Panc1 (cell line): ENCODE measurements at regions of chr2 and their contacts with region 1.

Region 1: DNA sequence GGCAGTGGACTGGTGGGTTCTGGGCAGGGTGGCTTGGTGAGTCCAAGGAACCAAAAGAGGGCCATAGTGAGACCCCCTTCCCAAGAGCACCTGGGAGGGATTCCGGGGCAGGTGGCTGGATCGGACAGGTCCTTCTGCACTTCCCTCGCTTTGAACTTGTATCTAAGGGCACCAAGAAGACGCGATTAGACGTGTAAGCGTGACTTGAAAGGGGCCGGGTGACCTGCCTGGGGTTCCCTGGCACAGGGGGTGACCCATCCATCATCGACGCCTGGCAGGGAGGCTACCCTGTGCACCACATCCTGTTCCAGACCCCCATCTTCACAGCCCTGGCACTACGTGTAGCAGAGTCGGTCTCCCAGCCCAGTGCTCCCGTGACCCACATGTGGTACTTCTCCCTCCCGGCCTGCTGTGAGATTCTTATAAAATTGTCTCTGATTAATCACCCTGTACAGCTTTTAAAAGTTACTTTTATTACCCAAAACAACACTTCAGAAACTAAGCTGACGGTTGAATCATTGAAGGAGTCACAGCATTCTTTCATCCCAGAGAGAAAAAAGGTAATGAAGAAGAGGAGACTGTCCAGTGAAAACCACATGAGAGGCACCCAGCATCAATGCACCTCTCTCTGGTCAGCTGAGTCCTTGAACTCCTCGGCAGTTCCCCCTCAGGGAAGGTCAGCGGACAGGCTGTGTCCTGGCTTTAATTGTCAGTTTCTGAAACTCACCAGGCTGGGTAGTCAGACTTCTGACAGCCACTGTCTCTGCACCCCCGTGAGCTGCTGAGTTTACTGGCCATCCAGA is 13.0 kb downstream of the SH3BP4 start:
- DNase-seq: no peak
- ATAC-seq: no peak
- H3K4me3 ChIP-seq: peak overlapping the region in 1 of 2 experiments; percentile 8; a peak in 1 of 4 replicates
- H3K27ac ChIP-seq: peak overlapping the region; percentile 100
- H3K4me1 ChIP-seq: peaks cover 93% of the 10 kb centered on the region
- H3K27me3 ChIP-seq: no peaks in the 10 kb centered on the region
- CTCF ChIP-seq: no peak

Region 2: DNA sequence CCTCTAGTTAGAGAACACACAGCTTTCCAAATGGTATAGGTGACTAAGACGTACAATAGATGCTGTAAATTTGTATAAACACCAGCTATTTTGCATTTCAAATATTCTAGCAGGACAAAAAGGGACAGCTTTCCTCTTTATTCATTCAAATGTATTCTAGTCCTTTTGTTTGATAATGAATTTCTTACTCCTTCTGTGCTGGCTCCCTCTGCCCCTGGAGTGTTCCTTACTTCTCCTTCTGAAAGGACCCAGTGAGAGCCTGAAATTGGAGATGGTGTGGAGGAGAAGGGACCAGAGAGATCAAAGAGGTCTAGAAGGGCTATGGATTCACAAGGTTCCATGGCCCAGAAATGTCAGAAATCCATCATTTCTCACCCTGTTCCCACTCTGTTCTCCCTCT is 66.2 kb before region 1 on chr2:
- CTCF ChIA-PET with region 1: no interaction called
- POLR2A ChIA-PET with region 1: no interaction called
- in situ Hi-C with region 1: no loop called
- intact Hi-C with region 1: no loop called
- DNase-seq: no peak
- ATAC-seq: no peak
- H3K4me3 ChIP-seq: no peak overlapping the region
- H3K27ac ChIP-seq: no peak overlapping the region
- H3K4me1 ChIP-seq: no peaks in the 10 kb centered on the region
- H3K27me3 ChIP-seq: no peaks in the 10 kb centered on the region
- CTCF ChIP-seq: no peak

Region 3: GRCh38 chr2:235070063-235070706 is 105.4 kb after region 1 on chr2:
- CTCF ChIA-PET with region 1: no interaction called
- POLR2A ChIA-PET with region 1: no interaction called
- in situ Hi-C with region 1: no loop called
- intact Hi-C with region 1: no loop called
- DNase-seq: no peak
- ATAC-seq: no peak
- H3K4me3 ChIP-seq: no peak overlapping the region
- H3K27ac ChIP-seq: no peak overlapping the region
- H3K4me1 ChIP-seq: 0 out of 2 replicates have a peak, but pooled peaks cover 2% of the 10 kb centered on the region
- H3K27me3 ChIP-seq: no peaks in the 10 kb centered on the region
- CTCF ChIP-seq: no peak

Region 4: DNA sequence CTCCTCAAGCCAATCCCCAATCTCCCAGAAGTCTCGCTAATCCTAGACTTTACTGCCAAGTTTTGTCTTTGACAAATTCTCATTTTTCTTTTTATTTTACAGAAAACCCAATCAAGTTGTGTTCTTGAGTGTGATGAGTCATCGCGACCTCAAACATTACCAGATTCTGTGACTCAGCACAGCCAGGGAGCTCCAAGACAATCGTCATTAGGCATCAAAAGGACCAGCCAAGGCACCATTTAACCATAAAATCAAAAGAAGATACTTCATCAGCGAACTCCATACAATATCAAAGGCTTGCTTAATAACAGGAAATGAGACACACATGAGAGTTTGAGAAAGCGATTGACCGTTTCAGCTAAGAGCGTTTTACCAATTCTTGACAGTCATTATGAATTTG is 382.9 kb after region 1 on chr2:
- CTCF ChIA-PET with region 1: no interaction called
- POLR2A ChIA-PET with region 1: no interaction called
- in situ Hi-C with region 1: no loop called
- intact Hi-C with region 1: no loop called
- DNase-seq: no peak
- ATAC-seq: no peak
- H3K4me3 ChIP-seq: no peak overlapping the region
- H3K27ac ChIP-seq: no peak overlapping the region
- H3K4me1 ChIP-seq: no peaks in the 10 kb centered on the region; the same call in 1 of the 2 replicates
- H3K27me3 ChIP-seq: peaks cover 4% of the 10 kb centered on the region
- CTCF ChIP-seq: no peak

Region 5: DNA sequence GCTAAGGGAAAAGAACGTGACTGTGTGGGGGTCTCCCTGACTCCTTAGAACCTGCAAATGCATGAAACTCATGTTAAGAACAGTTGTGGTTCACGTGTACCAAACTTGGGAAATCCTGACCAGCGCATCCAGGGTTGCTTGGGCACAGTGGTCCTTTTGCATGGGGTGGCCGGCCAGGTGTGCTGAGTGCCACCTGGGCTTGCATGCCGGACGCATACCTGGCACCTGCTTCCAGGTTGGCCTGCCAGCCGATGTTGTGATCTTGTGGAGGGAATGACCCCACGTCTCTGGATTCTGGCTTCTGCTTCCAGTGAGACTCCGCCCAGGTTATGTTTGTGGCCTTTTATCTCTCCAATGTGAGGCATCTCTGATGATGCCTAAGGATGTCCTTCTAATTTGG is 647.7 kb after region 1 on chr2:
- CTCF ChIA-PET with region 1: no interaction called
- POLR2A ChIA-PET with region 1: interaction called, 12 read pairs
- in situ Hi-C with region 1: no loop called
- intact Hi-C with region 1: no loop called
- DNase-seq: no peak
- ATAC-seq: no peak
- H3K4me3 ChIP-seq: no peak overlapping the region
- H3K27ac ChIP-seq: no peak overlapping the region
- H3K4me1 ChIP-seq: 0 out of 2 replicates have a peak, but pooled peaks cover under 1% of the 10 kb centered on the region
- H3K27me3 ChIP-seq: no peaks in the 10 kb centered on the region
- CTCF ChIP-seq: no peak

Region 6: GRCh38 chr2:235725016-235725489 is 760.2 kb after region 1 on chr2:
- CTCF ChIA-PET with region 1: no interaction called
- POLR2A ChIA-PET with region 1: no interaction called
- in situ Hi-C with region 1: no loop called
- intact Hi-C with region 1: no loop called
- DNase-seq: no peak
- ATAC-seq: no peak
- H3K4me3 ChIP-seq: no peak overlapping the region
- H3K27ac ChIP-seq: no peak overlapping the region
- H3K4me1 ChIP-seq: no peaks in the 10 kb centered on the region
- H3K27me3 ChIP-seq: no peaks in the 10 kb centered on the region
- CTCF ChIP-seq: no peak